ENCODE measurements at regions of chr15 and their contacts with region 1.

Region 1: DNA sequence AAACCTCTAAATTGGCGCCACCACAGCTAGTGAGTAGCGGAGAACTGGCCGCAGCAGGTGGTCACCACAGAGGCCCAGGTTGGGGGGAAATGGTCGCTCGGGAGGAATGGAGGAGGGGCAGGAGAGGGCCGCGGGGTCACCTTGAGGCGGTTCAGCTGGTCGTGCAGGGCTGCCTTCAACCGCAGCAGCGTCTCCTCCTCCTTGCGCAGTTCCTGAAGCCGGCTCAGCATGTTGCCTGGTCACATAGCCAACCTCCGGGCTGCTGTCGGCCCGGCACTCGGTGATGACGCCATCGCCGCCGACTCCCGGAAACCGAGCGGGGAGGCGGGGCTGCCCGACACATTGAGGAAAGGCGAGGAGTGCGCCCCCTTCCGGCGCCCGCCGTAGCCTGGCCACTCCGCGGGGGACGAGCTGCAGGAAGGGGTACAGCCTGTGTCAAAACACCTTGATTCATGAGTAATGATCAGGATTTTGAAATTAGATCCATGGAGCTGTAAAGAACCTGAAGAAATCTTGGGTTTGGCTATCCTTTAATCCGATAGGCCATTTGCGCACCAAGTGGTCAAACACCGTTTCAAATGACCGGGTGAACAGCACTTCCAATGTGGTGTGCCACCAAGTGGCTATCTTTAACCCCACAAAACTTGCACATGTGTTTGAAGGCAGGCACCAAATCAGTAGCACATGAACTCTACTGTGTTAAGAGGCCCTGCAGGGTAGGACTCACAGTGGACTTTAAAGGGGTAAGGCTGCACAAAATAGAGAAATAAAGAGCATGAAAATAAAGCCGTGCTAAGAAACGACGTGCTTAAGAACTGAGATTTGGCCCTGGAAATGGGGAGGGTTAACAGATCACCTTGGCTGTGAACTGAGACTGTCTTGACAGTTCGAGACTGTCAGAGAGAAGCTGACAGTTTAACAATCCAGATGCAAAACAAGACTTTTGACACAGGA is at the start of gene SNAPC5:
- DNase-seq: peak; percentile 98
- H3K4me3 Mint-ChIP-seq: peak within 1 kb of the TSS; percentile 97
- H3K27ac Mint-ChIP-seq: peak within 1 kb of the TSS; percentile 97
- H3K4me1 Mint-ChIP-seq: peaks cover 61% of the 10 kb centered on the region
- H3K27me3 Mint-ChIP-seq: no peaks in the 10 kb centered on the region

Region 2: GRCh38 chr15:66323312-66323928 is 174.4 kb before region 1 on chr15:
- CTCF ChIA-PET with region 1: interaction called, 12 read pairs
- DNase-seq: no peak
- H3K4me3 Mint-ChIP-seq: no peak overlapping the region
- H3K27ac Mint-ChIP-seq: no peak overlapping the region
- H3K4me1 Mint-ChIP-seq: no peaks in the 10 kb centered on the region
- H3K27me3 Mint-ChIP-seq: no peaks in the 10 kb centered on the region

Region 3: DNA sequence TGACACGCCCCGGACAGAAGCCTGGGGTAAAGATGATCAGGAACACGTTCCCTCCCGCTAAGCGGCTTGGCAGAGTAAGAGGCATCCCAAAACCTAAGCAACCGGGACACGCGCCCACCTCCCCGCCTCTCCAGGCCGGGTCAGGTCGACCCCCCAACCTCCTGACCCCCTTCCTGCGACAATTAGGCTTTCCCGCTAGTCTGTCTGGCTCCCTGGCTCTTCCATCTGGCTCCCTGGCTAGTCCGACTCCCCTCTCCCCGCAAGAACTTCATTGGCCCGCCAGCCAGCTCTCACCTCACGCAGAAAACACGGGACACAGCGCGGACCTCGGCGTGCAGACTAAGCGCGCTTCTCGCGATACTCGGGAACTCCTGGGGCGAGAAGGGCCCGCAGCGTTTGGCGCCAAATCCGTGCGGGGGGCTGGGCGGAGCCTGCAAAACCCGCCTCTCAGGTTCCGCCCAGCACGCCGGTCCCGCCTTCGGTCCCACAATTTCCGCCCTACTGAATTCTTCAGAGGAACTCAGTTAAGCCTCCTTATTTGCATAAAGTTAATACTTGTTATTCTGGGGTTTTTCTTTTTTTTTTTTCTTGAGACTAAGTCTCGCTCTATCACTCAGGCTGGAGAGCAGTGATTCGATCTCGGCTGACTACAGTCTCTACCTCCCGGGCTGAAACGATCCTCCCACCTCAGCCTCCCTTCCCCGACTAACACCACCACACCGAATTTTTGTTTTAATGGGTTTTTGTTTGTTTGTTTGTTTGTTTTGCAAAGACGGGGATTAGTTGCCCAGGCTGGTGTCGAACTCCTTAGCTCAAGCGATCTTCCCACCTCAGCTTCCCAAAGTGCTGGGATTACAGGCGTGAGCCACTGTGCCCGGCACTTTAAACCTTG is 141.2 kb before region 1 on chr15 and contains the start of gene TIPIN:
- CTCF ChIA-PET with region 1: interaction called, 31 read pairs
- DNase-seq: peak; percentile 99
- H3K4me3 Mint-ChIP-seq: peak within 1 kb of the TSS; percentile 99
- H3K27ac Mint-ChIP-seq: peak within 1 kb of the TSS; percentile 97
- H3K4me1 Mint-ChIP-seq: peaks cover 39% of the 10 kb centered on the region
- H3K27me3 Mint-ChIP-seq: no peaks in the 10 kb centered on the region

Region 4: GRCh38 chr15:66369773-66370651 is 127.8 kb before region 1 on chr15:
- CTCF ChIA-PET with region 1: interaction called, 10 read pairs
- DNase-seq: peak; percentile 53
- H3K4me3 Mint-ChIP-seq: peak overlapping the region; percentile 48
- H3K27ac Mint-ChIP-seq: peak overlapping the region; percentile 91
- H3K4me1 Mint-ChIP-seq: peaks cover 27% of the 10 kb centered on the region
- H3K27me3 Mint-ChIP-seq: no peaks in the 10 kb centered on the region

Region 5: GRCh38 chr15:66386204-66387123 is 111.3 kb before region 1 on chr15 and contains the start of gene MAP2K1:
- CTCF ChIA-PET with region 1: interaction called, 60 read pairs
- DNase-seq: peak; percentile 99
- H3K4me3 Mint-ChIP-seq: peak within 1 kb of the TSS; percentile 99
- H3K27ac Mint-ChIP-seq: peak within 1 kb of the TSS; percentile 99
- H3K4me1 Mint-ChIP-seq: peaks cover 49% of the 10 kb centered on the region
- H3K27me3 Mint-ChIP-seq: no peaks in the 10 kb centered on the region

Region 6: DNA sequence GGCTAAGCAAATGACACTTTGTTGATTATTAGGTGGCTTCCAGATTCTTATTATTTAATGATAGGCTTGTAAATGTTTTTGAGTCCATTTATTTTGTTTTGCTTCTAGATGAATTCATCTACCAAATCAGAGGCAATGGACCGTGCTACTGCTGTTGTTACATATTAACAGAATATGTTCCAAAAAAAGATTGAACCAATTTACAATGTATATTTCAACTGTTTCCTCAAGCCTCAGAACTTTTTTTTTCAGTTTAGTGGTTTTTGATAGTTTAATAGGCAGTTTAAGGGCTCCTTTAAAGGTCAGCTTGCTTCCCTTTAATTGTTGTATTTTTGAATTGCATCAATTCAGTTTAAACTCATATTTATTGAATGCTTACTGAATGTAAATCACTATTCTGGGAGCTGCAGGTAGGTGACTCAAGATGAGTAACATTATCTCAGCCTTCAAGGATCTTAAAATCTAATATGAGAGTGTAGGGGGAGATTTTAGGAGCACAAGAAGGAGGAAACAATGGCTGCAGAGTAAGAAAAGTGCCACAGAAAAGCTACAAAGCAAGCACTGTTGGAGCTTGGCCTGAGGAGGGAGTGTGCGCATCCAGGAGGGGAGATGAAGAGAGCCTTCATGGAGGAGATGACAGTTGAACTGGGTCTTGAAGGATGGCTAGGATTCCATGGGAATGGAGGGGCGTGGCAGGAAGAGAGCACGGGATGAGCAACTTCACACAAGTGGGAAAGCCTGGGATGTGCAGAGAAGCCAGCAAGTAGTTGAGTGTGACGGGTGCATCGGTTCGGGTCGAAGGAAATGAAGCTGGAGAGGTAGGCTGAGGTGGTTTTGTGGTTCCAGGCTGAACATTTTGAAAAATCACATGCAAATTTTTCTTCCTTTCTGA is 96.4 kb before region 1 on chr15:
- CTCF ChIA-PET with region 1: interaction called, 17 read pairs
- DNase-seq: peak; percentile 37
- H3K4me3 Mint-ChIP-seq: peak overlapping the region; percentile 63
- H3K27ac Mint-ChIP-seq: peak overlapping the region; percentile 83
- H3K4me1 Mint-ChIP-seq: peaks cover 79% of the 10 kb centered on the region
- H3K27me3 Mint-ChIP-seq: no peaks in the 10 kb centered on the region

Region 7: GRCh38 chr15:66535016-66535415 is 37.2 kb after region 1 on chr15:
- CTCF ChIA-PET with region 1: no interaction called
- DNase-seq: no peak
- H3K4me3 Mint-ChIP-seq: no peak overlapping the region
- H3K27ac Mint-ChIP-seq: no peak overlapping the region
- H3K4me1 Mint-ChIP-seq: no peaks in the 10 kb centered on the region
- H3K27me3 Mint-ChIP-seq: no peaks in the 10 kb centered on the region

Region 8: DNA sequence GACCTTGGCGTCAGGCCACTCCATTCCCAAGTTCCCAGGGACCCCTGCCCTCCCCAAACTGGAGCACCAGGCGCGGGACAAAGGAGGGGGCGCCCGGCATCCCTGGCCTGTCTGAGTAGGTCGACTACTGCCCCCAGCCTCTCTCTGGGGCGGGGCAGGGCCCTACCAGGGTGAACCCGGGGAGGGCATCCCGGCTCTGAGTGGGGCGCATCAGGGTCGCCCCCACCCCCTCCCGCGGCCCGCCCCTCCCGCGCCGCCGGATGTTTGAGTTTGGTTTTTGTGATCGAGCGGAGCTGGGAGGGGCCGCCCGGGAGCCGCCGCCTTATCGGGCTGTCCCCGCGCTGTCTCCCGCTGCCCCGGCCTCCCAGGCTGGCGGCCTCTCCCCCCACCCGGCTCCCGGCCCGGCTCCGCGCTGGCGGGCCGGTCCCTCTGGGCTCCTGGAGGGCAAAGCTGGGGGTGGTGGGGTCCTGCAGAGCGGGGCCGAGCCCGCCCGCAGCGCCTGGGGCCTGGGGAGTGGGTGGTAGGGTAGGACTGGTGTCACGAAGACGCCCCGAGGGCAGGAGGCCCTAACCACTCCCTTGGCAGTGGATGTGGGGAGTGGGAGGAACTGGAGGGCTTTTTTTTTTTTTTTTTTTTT is 157.1 kb after region 1 on chr15:
- CTCF ChIA-PET with region 1: no interaction called
- DNase-seq: peak; percentile 69
- H3K4me3 Mint-ChIP-seq: peak overlapping the region; percentile 32
- H3K27ac Mint-ChIP-seq: no peak overlapping the region
- H3K4me1 Mint-ChIP-seq: peaks cover 18% of the 10 kb centered on the region
- H3K27me3 Mint-ChIP-seq: peaks cover 36% of the 10 kb centered on the region

Region 9: GRCh38 chr15:66774001-66774814 is 276.4 kb after region 1 on chr15:
- CTCF ChIA-PET with region 1: no interaction called
- DNase-seq: peak; percentile 73
- H3K4me3 Mint-ChIP-seq: no peak overlapping the region
- H3K27ac Mint-ChIP-seq: no peak overlapping the region
- H3K4me1 Mint-ChIP-seq: peaks cover 2% of the 10 kb centered on the region
- H3K27me3 Mint-ChIP-seq: peaks cover 21% of the 10 kb centered on the region

Measured in activated naive CD4-positive, alpha-beta T cell treated with anti-CD3 and anti-CD28 coated beads, Interleukin-2, amount 10 ng/mL, durations not matched to agents 7 days and 5 days (primary cell).